ENCODE measurements at regions of chr13 and their contacts with region 1.

Region 1: GRCh38 chr13:46665633-46666482 is 112.9 kb downstream of the LRCH1 start:
- DNase-seq: peak; percentile 70
- ATAC-seq: peak; percentile 99
- H3K4me3 ChIP-seq: peak overlapping the region; percentile 29 to 55 (median 53)
- H3K27ac ChIP-seq: peak overlapping the region; percentile 75
- H3K4me1 ChIP-seq: peaks cover 63% of the 10 kb centered on the region
- H3K27me3 ChIP-seq: no peaks in the 10 kb centered on the region
- CTCF ChIP-seq: no peak
- EP300 ChIP-seq: no peak
- POLR2A ChIP-seq: peak in 1 of 2 experiments; percentile 63; a peak in 1 of 4 replicates
- RAD21 ChIP-seq: no peak

Region 2: DNA sequence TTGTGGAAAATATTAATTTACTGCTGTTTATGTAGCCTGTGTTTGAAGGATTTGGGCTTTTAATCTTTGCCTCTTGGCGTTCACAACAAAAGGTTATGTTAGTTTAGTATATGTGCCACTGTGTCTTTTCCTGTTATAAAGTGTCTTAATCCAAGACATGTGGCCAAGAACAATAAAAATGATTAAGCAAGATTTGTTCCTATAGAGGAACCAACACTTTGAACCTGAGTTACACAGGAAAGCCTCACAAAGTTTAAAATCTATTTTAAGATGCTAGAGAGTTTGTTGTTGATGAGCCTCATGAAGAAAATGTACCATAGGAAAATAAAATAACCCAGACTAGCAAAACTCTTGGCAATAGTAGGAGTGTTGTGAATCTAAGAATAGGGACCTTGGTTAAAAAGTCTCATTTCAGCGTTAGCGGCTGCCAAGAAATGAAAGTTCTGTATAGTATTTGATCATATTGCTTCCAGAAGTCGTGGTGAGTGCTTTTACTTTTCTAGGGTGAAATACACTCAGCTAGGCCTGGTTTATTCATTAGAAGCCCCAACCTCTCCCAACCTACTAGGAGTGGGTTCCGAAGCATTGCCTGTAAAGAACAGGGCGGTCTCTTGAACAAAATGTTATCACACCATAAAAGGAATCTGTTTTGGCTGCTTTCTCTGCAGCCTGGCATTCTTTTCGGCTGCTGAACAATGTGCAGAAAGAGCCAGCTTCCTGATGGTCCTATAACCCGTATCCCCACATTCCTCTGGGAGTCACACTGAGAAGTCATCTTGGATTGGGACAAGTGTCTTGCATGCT is 10.3 kb before region 1 on chr13:
- CTCF ChIA-PET with region 1: no interaction called
- POLR2A ChIA-PET with region 1: interaction called, 4 read pairs
- in situ Hi-C with region 1: no loop called
- intact Hi-C with region 1: loop called (anchors 1 kb)
- DNase-seq: no peak
- ATAC-seq: no peak
- H3K4me3 ChIP-seq: no peak overlapping the region
- H3K27ac ChIP-seq: no peak overlapping the region
- H3K4me1 ChIP-seq: peaks cover 33% of the 10 kb centered on the region
- H3K27me3 ChIP-seq: no peaks in the 10 kb centered on the region
- CTCF ChIP-seq: no peak
- EP300 ChIP-seq: no peak
- POLR2A ChIP-seq: no peak
- RAD21 ChIP-seq: no peak